GM10248 (cell line): ENCODE measurements at regions of chr1 and their contacts with region 1.

Region 1: DNA sequence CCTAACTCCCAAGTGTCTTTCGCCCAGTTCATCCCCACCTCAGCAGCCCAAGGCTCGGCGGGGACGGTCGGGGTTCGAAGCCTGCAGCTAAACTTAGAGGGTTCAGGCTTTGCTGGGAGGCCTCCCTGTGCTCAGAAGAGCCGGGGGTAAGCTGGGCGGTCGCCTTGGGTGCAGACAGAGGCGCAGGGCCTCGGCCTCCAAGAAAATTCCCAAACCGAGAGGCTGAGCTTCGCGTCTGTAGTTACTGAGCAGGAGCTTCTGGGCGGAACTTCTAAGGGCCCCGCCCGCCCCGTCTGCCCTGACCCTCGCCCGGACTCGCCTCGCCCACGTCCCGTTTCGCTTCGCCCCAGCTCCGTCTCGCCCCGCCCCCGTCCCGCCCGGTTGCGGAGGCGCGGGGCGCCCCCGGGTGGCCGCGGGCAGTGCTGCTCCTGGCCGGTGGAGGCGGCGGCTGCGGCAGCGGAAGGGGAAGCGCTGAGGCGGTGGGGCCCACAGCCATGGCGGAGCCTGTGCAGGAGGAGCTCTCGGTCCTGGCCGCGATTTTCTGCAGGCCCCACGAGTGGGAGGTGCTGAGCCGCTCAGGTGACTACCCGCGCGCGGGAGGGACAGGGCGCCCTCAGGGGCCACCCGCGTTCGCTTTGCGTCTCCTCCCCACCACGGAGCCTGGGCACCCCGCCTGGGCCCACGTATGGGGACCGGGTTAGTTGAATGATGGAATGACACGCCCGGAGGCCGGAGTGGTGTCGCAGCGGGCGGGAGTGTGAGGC is at the start of gene RWDD3:
- DNase-seq: peak; percentile 94
- CTCF ChIP-seq: peak; percentile 98

Region 2: DNA sequence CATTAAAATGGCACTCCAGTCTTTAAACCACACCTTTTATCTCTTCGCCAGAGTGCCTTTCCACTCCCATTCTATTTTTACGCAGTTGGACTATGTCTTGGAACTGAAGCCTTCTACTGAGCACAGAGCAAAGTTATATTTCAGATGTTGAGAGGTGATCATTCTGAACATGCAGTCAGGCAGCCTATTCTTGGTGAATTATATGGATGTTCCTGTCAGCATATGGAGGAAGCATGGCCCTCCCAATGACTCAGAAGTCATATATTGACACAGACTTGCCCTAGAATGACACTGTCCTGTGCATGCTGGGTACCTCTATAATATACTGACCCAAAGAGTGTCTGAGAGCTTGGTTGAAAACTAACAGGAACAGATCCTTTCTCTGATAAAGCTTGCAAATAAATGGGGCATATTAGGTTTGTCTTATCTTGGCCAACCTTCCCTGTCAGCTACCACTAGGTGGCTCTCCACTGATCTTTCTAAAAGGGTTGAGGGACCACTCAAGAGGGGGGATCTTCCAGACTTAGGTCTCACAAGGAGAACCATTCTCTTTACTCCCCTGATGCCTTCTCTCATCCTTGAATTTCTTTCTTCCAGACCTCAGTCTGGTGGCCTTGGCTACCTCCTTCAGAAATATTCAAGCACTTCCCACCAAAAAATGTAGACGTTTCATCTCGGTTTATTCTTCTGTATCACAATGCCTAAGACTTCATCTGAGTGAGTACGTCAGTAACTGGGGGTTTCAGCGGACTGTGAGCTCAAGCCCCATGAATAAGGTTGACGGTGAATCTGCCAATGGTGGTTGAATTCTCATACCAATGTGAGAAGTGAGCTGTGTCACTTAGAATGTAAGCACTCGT is 149.4 kb before region 1 on chr1:
- CTCF ChIA-PET with region 1: interaction called, 24 read pairs
- POLR2A ChIA-PET with region 1: no interaction called
- DNase-seq: peak; percentile 59
- CTCF ChIP-seq: peak; percentile 76

Region 3: DNA sequence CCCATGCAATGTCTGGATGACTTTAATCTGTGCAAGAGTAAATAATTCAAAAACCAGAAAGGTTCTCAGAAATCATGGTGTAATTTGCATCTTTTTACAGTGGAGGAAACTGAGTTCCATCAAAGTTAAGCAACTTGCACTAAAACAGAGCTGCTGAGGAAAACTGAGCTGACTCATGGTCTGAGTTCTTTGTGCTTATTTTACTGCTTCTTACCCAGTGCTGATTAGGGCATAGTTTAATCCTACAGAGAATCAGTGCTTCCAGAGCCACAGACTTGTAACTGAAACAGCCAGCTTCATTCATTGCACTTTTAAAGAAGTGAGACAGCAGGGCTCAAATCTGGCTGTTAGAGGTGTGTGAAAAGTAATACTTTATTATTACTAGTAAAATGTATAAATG is 10.8 kb before region 1 on chr1:
- CTCF ChIA-PET with region 1: interaction called, 25 read pairs
- POLR2A ChIA-PET with region 1: no interaction called
- DNase-seq: no peak
- CTCF ChIP-seq: no peak

Region 4: DNA sequence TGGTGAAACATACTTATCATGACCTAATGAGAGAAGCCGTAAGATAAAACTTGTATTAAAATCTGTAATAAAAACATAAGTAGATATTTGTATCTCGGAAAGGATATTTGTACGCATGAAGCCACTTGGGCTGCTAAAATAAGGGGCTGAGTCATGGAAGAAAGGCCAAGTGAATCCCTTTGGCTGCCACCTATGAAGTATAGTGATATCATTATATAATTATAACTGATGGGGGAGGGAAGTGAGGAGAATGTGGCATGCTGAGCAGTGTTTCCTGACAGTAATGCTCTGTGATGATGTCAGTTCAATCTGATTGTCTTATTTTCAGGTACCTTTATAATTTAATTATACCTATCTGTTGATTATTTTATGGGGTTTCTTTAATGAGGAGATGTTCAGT is 13.7 kb after region 1 on chr1:
- CTCF ChIA-PET with region 1: interaction called, 36 read pairs
- POLR2A ChIA-PET with region 1: no interaction called
- DNase-seq: no peak
- CTCF ChIP-seq: no peak

Region 5: DNA sequence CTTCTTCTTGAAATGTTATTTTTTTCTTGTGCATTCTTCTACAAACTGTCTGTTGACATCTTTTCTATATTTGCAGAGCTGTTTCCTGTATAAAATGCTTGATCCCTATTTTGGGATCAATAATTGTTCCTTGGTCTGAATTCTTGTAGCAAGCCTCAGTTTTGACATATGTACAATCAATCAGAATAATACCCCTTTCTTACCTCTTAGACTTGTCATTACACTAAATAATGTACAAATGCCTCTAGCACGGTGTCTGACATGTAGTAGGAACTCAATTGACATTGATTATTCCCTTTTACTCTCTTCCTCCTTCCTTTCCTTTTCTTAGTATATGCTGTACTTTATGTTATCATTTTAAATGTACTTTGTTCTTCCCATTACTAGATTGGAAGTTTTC is 25.3 kb after region 1 on chr1:
- CTCF ChIA-PET with region 1: no interaction called
- POLR2A ChIA-PET with region 1: no interaction called
- DNase-seq: no peak
- CTCF ChIP-seq: no peak